HCT116 (cell line): ENCODE measurements at regions of chr11 and their contacts with region 1.

Region 1: GRCh38 chr11:1153951-1154493 is 3.7 kb upstream of the MUC5AC start:
- DNase-seq: peak; percentile 63
- ATAC-seq: peak; percentile 89
- H3K4me3 ChIP-seq: peak overlapping the region in 1 of 2 experiments; percentile 18; a peak in 1 of 4 replicates
- H3K27ac ChIP-seq: no peak overlapping the region; the same call in 1 of the 2 replicates
- H3K4me1 ChIP-seq: peaks cover 13 to 33% of the 10 kb centered on the region in 2 experiments; a peak in 3 of 4 replicates
- H3K27me3 ChIP-seq: no peaks in the 10 kb centered on the region
- CTCF ChIP-seq: no peak
- POLR2A ChIP-seq: no peak
- RAD21 ChIP-seq: no peak

Region 2: GRCh38 chr11:1202776-1203504 is 48.9 kb after region 1 on chr11:
- CTCF ChIA-PET with region 1: no interaction called
- POLR2A ChIA-PET with region 1: no interaction called
- RAD21 ChIA-PET with region 1: no interaction called
- intact Hi-C with region 1: loop called (anchors 5 kb)
- DNase-seq: peak; percentile 23
- ATAC-seq: peak; percentile 89
- H3K4me3 ChIP-seq: no peak overlapping the region
- H3K27ac ChIP-seq: no peak overlapping the region; the same call in 1 of the 2 replicates
- H3K4me1 ChIP-seq: peaks cover 13 to 17% of the 10 kb centered on the region in 2 experiments
- H3K27me3 ChIP-seq: no peaks in the 10 kb centered on the region
- CTCF ChIP-seq: peak; percentile 71 to 97 (median 83)
- POLR2A ChIP-seq: no peak
- RAD21 ChIP-seq: peak; percentile 86